ENCODE measurements at regions of chrX and their contacts with region 1.

Region 1: GRCh38 chrX:33336783-33337182 is 125.4 kb upstream of the DMD start:
- DNase-seq: peak; percentile 44
- H3K4me3 ChIP-seq: no peak overlapping the region
- H3K27ac ChIP-seq: no peak overlapping the region
- H3K4me1 ChIP-seq: peaks cover 4% of the 10 kb centered on the region
- H3K27me3 ChIP-seq: peaks cover 2% of the 10 kb centered on the region
- CTCF ChIP-seq: peak; percentile 72 to 77

Region 2: DNA sequence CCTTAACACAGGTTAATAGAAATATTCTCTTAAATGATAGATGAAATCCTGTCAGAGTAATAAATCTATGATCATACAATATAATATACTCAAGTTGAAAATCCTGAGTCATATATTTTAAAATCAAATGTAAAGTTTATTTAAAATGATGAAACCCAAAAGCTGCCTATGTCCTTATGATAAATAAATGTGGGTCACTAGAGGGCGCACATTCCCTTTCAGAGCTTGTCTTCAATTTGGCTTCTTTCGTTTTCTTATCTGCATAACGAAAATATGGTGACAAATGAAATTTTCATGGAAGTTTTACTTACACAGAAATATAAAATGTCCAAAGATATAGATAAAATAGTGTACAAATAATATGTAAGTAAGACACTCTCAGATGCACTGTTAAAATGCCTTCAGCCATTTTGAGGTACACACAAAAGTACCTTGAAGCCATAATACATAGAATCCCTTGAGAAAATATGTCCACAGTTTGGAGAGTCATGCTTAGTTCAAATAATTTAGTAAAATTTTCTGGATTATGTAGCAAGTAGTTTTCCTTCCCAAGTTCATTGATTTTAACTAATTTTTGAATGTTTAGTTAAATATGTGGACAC is 805.9 kb before region 1 on chrX:
- CTCF ChIA-PET with region 1: interaction called, 3 read pairs
- dilution Hi-C with region 1: no loop called
- in situ Hi-C with region 1: loop called in 1 of 2 experiments (anchors 10 kb)
- intact Hi-C with region 1: no loop called
- DNase-seq: peak; percentile 20
- H3K4me3 ChIP-seq: peak overlapping the region in 1 of 3 experiments; percentile 25
- H3K27ac ChIP-seq: no peak overlapping the region
- H3K4me1 ChIP-seq: no peaks in the 10 kb centered on the region
- H3K27me3 ChIP-seq: peaks cover 2% of the 10 kb centered on the region
- CTCF ChIP-seq: peak; percentile 70 to 80

Region 3: GRCh38 chrX:32778965-32779364 is 557.8 kb before region 1 on chrX:
- CTCF ChIA-PET with region 1: interaction called, 3 read pairs
- dilution Hi-C with region 1: no loop called
- in situ Hi-C with region 1: loop called in 1 of 2 experiments (anchors 25 kb)
- intact Hi-C with region 1: loop called (anchors 1 kb)
- DNase-seq: no peak
- H3K4me3 ChIP-seq: no peak overlapping the region
- H3K27ac ChIP-seq: no peak overlapping the region
- H3K4me1 ChIP-seq: no peaks in the 10 kb centered on the region
- H3K27me3 ChIP-seq: no peaks in the 10 kb centered on the region
- CTCF ChIP-seq: peak; percentile 4 to 34

Region 4: DNA sequence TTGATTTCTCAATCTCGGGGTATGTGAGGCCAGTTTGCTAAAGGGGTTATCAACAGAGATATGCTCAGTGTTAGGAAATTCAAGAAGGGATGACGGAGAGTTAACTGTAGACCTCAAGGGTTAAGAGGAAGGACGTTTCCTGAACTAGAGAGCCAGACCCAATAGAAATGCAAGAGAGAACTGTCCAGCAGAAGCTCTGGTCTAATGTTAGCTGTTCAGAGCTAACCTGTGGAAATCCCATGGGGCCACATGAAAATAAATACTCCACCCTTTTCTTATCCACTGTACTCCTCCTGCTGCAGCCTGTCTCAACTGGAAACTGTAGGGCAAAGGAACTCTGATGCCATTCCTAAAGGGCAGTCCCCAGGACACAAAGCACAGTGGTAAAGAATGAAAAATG is 399.7 kb before region 1 on chrX:
- CTCF ChIA-PET with region 1: no interaction called
- dilution Hi-C with region 1: no loop called
- in situ Hi-C with region 1: no loop called
- intact Hi-C with region 1: no loop called
- DNase-seq: no peak
- H3K4me3 ChIP-seq: no peak overlapping the region
- H3K27ac ChIP-seq: no peak overlapping the region
- H3K4me1 ChIP-seq: no peaks in the 10 kb centered on the region
- H3K27me3 ChIP-seq: peaks cover 2% of the 10 kb centered on the region
- CTCF ChIP-seq: no peak

Region 5: GRCh38 chrX:33014086-33014485 is 322.7 kb before region 1 on chrX:
- CTCF ChIA-PET with region 1: no interaction called
- dilution Hi-C with region 1: no loop called
- in situ Hi-C with region 1: no loop called
- intact Hi-C with region 1: loop called (anchors 10 kb)
- DNase-seq: no peak
- H3K4me3 ChIP-seq: no peak overlapping the region
- H3K27ac ChIP-seq: no peak overlapping the region
- H3K4me1 ChIP-seq: no peaks in the 10 kb centered on the region
- H3K27me3 ChIP-seq: peaks cover 2% of the 10 kb centered on the region
- CTCF ChIP-seq: no peak

Region 6: GRCh38 chrX:33045882-33046281 is 290.9 kb before region 1 on chrX:
- CTCF ChIA-PET with region 1: interaction called, 5 read pairs
- dilution Hi-C with region 1: no loop called
- in situ Hi-C with region 1: no loop called
- intact Hi-C with region 1: loop called (anchors 10 kb)
- DNase-seq: no peak
- H3K4me3 ChIP-seq: no peak overlapping the region
- H3K27ac ChIP-seq: no peak overlapping the region
- H3K4me1 ChIP-seq: no peaks in the 10 kb centered on the region
- H3K27me3 ChIP-seq: no peaks in the 10 kb centered on the region
- CTCF ChIP-seq: no peak

Region 7: DNA sequence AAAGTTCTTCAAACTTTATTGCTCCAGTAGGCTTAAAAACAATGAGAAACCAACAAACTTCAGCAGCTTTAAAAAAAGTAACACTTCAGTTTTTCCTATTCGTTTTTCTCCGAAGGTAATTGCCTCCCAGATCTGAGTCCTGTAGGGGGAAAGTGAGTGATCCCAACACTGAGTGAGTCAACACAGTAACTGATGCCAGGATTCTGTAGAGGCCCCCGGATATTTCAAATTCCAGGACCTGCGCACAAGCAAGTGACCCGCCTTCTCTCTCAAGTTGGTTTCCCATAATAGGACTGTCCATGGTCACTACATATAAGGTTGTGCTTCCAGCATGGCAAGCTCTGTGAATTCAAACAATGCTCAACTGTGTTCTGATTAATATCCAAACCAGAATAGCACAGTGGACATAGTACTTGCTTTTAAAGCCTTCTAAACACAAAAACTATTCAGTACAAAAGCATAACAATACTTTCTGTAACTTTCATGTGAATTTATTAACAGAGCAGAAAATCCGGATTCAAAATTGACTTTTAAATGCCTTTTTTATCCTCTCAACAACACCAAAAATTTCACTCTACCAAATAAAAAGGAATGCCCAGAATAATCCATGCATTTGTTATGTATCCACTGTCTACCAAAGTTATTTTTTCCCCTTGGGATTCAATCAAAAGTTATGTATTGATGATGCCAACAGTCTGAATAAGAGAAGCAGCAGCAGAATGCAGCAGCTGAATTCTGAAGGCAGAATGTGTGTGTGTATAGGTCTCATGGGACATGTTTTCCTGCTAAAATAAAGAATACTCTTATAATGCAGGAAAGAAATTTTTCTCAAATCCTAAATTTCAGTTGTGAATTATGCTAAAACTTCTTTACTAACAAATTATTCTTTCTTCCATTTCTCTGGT is 125.2 kb before region 1 on chrX and contains the start of gene DMD:
- CTCF ChIA-PET with region 1: no interaction called
- dilution Hi-C with region 1: no loop called
- in situ Hi-C with region 1: no loop called
- intact Hi-C with region 1: loop called (anchors 2 kb)
- DNase-seq: peak; percentile 76
- H3K4me3 ChIP-seq: peak within 1 kb of the TSS; percentile 41 to 55 (median 53)
- H3K27ac ChIP-seq: peak within 1 kb of the TSS; percentile 51
- H3K4me1 ChIP-seq: peaks cover 3% of the 10 kb centered on the region
- H3K27me3 ChIP-seq: no peaks in the 10 kb centered on the region
- CTCF ChIP-seq: peak in 1 of 2 donors; percentile 24
- total RNA-seq, gene DMD: 24.4 to 73.2 TPM

Region 8: GRCh38 chrX:33298622-33299021 is 38.2 kb before region 1 on chrX:
- CTCF ChIA-PET with region 1: no interaction called
- dilution Hi-C with region 1: no loop called
- in situ Hi-C with region 1: no loop called
- intact Hi-C with region 1: loop called (anchors 1 kb)
- DNase-seq: no peak
- H3K4me3 ChIP-seq: no peak overlapping the region
- H3K27ac ChIP-seq: no peak overlapping the region
- H3K4me1 ChIP-seq: peaks cover 4% of the 10 kb centered on the region
- H3K27me3 ChIP-seq: no peaks in the 10 kb centered on the region
- CTCF ChIP-seq: no peak

Region 9: DNA sequence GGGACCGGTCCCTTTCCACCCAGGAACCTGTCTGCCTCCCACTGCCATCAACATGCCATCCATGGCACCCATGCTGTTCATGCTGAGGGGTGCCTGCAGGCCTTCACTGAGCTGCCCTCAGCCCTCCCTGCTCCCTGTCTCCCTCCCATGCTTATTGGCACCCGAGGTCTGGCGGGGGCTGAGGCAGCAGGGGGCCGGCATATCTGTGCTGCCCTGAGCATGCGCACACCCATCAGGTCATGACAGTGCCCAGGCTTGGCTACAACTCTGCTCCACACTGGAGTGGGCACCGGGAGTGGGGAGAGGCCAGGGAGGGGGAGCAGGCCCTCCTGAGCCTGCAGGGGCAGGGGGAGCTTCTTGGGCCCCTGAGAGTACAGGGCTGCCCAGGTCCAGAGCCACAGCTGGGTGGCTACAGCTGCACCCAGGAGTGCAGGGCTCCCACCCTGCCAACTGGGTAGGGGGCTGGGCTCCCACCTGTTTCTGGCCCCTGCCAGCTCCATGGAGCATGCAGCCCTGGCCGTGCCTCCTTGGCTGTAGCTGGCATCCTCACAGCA is 270.3 kb after region 1 on chrX:
- CTCF ChIA-PET with region 1: no interaction called
- dilution Hi-C with region 1: no loop called
- in situ Hi-C with region 1: no loop called
- intact Hi-C with region 1: no loop called
- DNase-seq: no peak
- H3K4me3 ChIP-seq: no peak overlapping the region
- H3K27ac ChIP-seq: no peak overlapping the region
- H3K4me1 ChIP-seq: no peaks in the 10 kb centered on the region
- H3K27me3 ChIP-seq: no peaks in the 10 kb centered on the region
- CTCF ChIP-seq: no peak

Measured in mammary epithelial cell (primary cell).